Stomach (tissue), 19 donors: ENCODE measurements at regions of chr7 and their contacts with region 1.

Region 1: DNA sequence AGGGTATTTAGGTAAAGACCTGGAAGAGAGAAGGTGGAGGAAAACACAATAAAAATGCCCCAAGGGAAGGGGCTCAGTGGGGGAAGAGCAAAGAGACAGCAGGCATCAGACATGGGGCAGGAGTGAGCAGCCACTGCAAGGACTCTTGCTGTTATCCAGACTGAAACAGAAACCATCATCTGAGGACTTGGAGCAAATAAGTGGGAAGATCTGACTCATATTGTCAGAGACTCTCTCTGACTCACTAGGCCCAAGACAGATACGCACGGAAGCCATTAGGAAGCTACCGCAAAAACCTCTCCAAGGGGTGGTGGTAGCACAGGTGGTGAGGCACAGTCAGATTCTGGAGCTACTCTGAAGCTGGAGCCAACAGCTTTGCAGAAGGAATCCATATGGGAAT is 110.7 kb downstream of the RNF32 start:
- DNase-seq: peak in 1 of 2 donors; percentile 11
- H3K4me3 ChIP-seq: no peak overlapping the region
- H3K27ac ChIP-seq: no peak overlapping the region
- H3K4me1 ChIP-seq: peaks cover 0 to 28% (median 4%) of the 10 kb centered on the region in 4 donors
- H3K27me3 ChIP-seq: no peaks in the 10 kb centered on the region
- CTCF ChIP-seq: no peak
- EP300 ChIP-seq: no peak
- POLR2A ChIP-seq: no peak

Region 2: GRCh38 chr7:156650042-156650441 is 101.3 kb before region 1 on chr7:
- intact Hi-C with region 1: loop called (anchors 10 kb)
- DNase-seq: peak; percentile 73 to 79
- H3K4me3 ChIP-seq: no peak overlapping the region
- H3K27ac ChIP-seq: no peak overlapping the region
- H3K4me1 ChIP-seq: no peaks in the 10 kb centered on the region
- H3K27me3 ChIP-seq: peaks cover 0 to 28% (median 0%) of the 10 kb centered on the region in 3 donors
- CTCF ChIP-seq: peak in 5 of 7 experiments; percentile 33 to 77 (median 49)
- EP300 ChIP-seq: no peak
- POLR2A ChIP-seq: no peak

Region 3: GRCh38 chr7:156943091-156944041 is 192.0 kb after region 1 on chr7:
- intact Hi-C with region 1: no loop called
- DNase-seq: peak in 1 of 2 donors; percentile 50
- H3K4me3 ChIP-seq: peak overlapping the region in 1 of 4 donors; percentile 13
- H3K27ac ChIP-seq: no peak overlapping the region
- H3K4me1 ChIP-seq: peaks cover 0 to 9% (median 0%) of the 10 kb centered on the region in 4 donors
- H3K27me3 ChIP-seq: peaks cover 0 to 40% (median 5%) of the 10 kb centered on the region in 3 donors
- CTCF ChIP-seq: no peak
- EP300 ChIP-seq: no peak
- POLR2A ChIP-seq: no peak